Activated CD4-positive, alpha-beta memory T cell treated with anti-CD3 and anti-CD28 coated beads for 36 hours (primary cell): ENCODE measurements at regions of chr14 and their contacts with region 1.

Region 1: GRCh38 chr14:22918804-22919600 is at the start of gene RBM23:
- DNase-seq: peak; percentile 100
- H3K4me3 Mint-ChIP-seq: peak within 1 kb of the TSS; percentile 84
- H3K27ac Mint-ChIP-seq: peak within 1 kb of the TSS; percentile 99
- H3K4me1 Mint-ChIP-seq: peaks cover 35% of the 10 kb centered on the region
- H3K27me3 Mint-ChIP-seq: no peaks in the 10 kb centered on the region
- total RNA-seq, gene RBM23: 55.0 to 56.0 TPM

Region 2: GRCh38 chr14:22589096-22589839 is 329.7 kb before region 1 on chr14 and contains the start of gene DAD1:
- CTCF ChIA-PET with region 1: interaction called, 5 read pairs
- POLR2A ChIA-PET with region 1: interaction called, 13 read pairs
- intact Hi-C with region 1: loop called (anchors 2 kb)
- DNase-seq: peak; percentile 100
- H3K4me3 Mint-ChIP-seq: peak within 1 kb of the TSS; percentile 99
- H3K27ac Mint-ChIP-seq: peak within 1 kb of the TSS; percentile 100
- H3K4me1 Mint-ChIP-seq: peaks cover 64% of the 10 kb centered on the region
- H3K27me3 Mint-ChIP-seq: peaks cover 5% of the 10 kb centered on the region
- total RNA-seq, gene DAD1: 292 to 305 TPM

Region 3: GRCh38 chr14:22641846-22642245 is 277.2 kb before region 1 on chr14:
- CTCF ChIA-PET with region 1: no interaction called
- POLR2A ChIA-PET with region 1: no interaction called
- intact Hi-C with region 1: no loop called
- DNase-seq: no peak
- H3K4me3 Mint-ChIP-seq: no peak overlapping the region
- H3K27ac Mint-ChIP-seq: no peak overlapping the region
- H3K4me1 Mint-ChIP-seq: peaks cover 5% of the 10 kb centered on the region
- H3K27me3 Mint-ChIP-seq: no peaks in the 10 kb centered on the region

Region 4: DNA sequence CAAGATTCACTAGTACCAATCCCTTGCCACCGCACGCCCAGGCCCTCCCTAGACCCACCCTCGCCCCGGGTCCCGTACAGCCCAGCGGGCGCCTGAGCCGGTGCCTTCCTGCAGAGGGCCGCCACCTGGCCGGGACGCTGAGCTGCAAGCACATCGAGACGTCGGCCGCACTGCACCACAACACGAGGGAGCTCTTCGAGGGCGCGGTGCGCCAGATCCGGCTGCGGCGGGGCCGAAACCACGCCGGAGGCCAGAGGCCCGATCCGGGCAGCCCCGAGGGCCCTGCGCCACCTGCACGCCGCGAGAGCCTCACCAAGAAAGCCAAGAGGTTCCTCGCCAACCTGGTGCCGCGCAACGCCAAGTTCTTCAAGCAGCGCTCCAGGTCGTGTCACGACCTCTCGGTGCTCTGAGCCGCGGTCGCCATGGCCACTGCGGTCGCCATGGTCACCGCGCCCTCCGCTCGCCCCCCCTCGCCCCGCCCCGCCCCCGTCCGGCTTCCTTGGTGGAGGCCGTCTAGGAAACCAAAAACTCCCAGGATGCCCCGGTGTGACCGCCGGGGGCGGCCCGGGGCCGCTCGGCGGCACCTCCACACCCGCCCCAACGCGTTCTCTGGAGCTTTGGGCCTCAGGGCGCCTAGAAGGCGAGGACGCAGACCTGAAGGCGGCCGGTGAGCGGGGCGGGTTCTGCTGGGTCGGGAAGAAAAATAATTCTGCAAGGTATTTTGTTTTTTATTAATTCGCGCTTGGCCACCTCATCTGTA is 32.3 kb before region 1 on chr14:
- CTCF ChIA-PET with region 1: no interaction called
- POLR2A ChIA-PET with region 1: interaction called, 4 read pairs
- intact Hi-C with region 1: loop called (anchors 1 kb)
- DNase-seq: peak; percentile 91
- H3K4me3 Mint-ChIP-seq: peak overlapping the region; percentile 92
- H3K27ac Mint-ChIP-seq: peak overlapping the region; percentile 88
- H3K4me1 Mint-ChIP-seq: peaks cover 57% of the 10 kb centered on the region
- H3K27me3 Mint-ChIP-seq: no peaks in the 10 kb centered on the region

Region 5: GRCh38 chr14:22900081-22900799 is 18.8 kb before region 1 on chr14:
- CTCF ChIA-PET with region 1: interaction called, 28 read pairs
- POLR2A ChIA-PET with region 1: interaction called, 5 read pairs
- intact Hi-C with region 1: no loop called
- DNase-seq: peak; percentile 44
- H3K4me3 Mint-ChIP-seq: no peak overlapping the region
- H3K27ac Mint-ChIP-seq: no peak overlapping the region
- H3K4me1 Mint-ChIP-seq: peaks cover 11% of the 10 kb centered on the region
- H3K27me3 Mint-ChIP-seq: no peaks in the 10 kb centered on the region

Region 6: GRCh38 chr14:22955702-22956569 is 36.9 kb after region 1 on chr14:
- CTCF ChIA-PET with region 1: interaction called, 3 read pairs
- POLR2A ChIA-PET with region 1: interaction called, 7 read pairs
- intact Hi-C with region 1: loop called (anchors 5 kb)
- DNase-seq: no peak
- H3K4me3 Mint-ChIP-seq: peak overlapping the region; percentile 88
- H3K27ac Mint-ChIP-seq: peak overlapping the region; percentile 85
- H3K4me1 Mint-ChIP-seq: peaks cover 16% of the 10 kb centered on the region
- H3K27me3 Mint-ChIP-seq: no peaks in the 10 kb centered on the region